Activated T-helper 1 cell treated with anti-CD3 and anti-CD28 coated beads, Interleukin-12 subunit alpha, Interleukin-12 subunit beta, Interleukin-2, Interleukin-4 antibody, amounts not matched to agents 30 ng/mL and 10 ng/mL and 1 ng/mL, durations not matched to agents 14 hours and 24 hours and 36 hours (primary cell): ENCODE measurements at regions of chr17 and their contacts with region 1.

Region 1: GRCh38 chr17:27473748-27474609 is 17.7 kb downstream of the KSR1 start:
- DNase-seq: peak; percentile 83
- H3K4me3 Mint-ChIP-seq: peak overlapping the region; percentile 58
- H3K27ac Mint-ChIP-seq: peak overlapping the region; percentile 97
- H3K4me1 Mint-ChIP-seq: peaks cover 95% of the 10 kb centered on the region
- H3K27me3 Mint-ChIP-seq: no peaks in the 10 kb centered on the region

Region 2: GRCh38 chr17:27245230-27245696 is 228.7 kb before region 1 on chr17:
- intact Hi-C with region 1: no loop called
- DNase-seq: no peak
- H3K4me3 Mint-ChIP-seq: no peak overlapping the region
- H3K27ac Mint-ChIP-seq: no peak overlapping the region
- H3K4me1 Mint-ChIP-seq: peaks cover 20% of the 10 kb centered on the region
- H3K27me3 Mint-ChIP-seq: peaks cover 34% of the 10 kb centered on the region

Region 3: DNA sequence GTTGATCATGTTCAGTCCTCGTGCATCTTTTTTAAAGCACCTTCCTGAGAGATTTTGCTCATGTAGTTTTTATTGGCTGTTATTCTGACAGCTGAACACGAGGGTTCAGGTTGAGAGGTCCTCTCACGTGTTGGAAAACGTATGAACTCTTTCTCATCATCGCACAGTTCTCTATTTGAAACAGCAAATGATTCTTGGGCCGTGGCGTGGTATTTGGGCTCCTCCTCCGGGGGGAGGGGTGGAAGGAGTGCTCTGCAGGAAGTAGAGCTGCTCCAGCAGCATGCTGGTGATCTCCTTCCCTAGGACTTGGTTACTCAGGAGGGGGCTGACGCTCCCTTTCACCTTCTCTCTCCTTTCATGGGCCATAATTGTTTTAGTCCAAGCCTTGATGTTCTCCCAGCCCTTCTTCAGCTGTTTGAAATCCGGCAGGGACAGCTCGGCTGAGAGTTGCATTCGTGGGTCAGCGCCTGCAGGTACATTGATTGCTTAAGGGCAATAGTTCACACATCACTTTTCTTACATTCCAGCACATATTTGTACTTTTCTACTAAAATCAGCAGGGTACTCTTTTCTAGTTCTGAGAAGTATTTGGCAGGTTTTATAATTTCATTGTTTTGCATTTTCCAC is 52.7 kb after region 1 on chr17:
- intact Hi-C with region 1: loop called (anchors 1 kb)
- DNase-seq: peak; percentile 54
- H3K4me3 Mint-ChIP-seq: peak overlapping the region; percentile 68
- H3K27ac Mint-ChIP-seq: peak overlapping the region; percentile 76
- H3K4me1 Mint-ChIP-seq: peaks cover 94% of the 10 kb centered on the region
- H3K27me3 Mint-ChIP-seq: no peaks in the 10 kb centered on the region

Region 4: DNA sequence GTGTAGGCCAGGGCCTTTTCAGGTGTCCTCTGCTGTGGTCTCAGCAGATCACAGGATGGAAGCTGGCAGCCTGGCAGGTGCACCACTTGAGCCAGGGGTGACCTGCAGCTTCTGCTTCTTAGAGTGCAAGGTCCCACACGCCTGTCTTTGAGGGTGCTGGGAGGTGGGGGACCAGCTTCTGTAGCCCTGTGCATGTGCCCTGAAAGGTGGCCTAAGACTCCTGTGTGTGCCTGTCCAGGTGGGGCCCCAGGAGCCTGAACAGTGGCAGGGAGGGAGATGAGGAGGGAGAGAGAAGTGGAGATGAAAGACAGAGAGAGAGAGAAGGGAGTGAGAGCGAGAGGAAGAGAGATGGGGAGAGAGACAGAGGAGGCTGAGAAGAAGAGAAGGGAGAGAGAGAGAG is 203.2 kb after region 1 on chr17:
- intact Hi-C with region 1: no loop called
- DNase-seq: no peak
- H3K4me3 Mint-ChIP-seq: no peak overlapping the region
- H3K27ac Mint-ChIP-seq: no peak overlapping the region
- H3K4me1 Mint-ChIP-seq: no peaks in the 10 kb centered on the region
- H3K27me3 Mint-ChIP-seq: peaks cover 14% of the 10 kb centered on the region